ENCODE measurements at regions of chr17 and their contacts with region 1.

Region 1: DNA sequence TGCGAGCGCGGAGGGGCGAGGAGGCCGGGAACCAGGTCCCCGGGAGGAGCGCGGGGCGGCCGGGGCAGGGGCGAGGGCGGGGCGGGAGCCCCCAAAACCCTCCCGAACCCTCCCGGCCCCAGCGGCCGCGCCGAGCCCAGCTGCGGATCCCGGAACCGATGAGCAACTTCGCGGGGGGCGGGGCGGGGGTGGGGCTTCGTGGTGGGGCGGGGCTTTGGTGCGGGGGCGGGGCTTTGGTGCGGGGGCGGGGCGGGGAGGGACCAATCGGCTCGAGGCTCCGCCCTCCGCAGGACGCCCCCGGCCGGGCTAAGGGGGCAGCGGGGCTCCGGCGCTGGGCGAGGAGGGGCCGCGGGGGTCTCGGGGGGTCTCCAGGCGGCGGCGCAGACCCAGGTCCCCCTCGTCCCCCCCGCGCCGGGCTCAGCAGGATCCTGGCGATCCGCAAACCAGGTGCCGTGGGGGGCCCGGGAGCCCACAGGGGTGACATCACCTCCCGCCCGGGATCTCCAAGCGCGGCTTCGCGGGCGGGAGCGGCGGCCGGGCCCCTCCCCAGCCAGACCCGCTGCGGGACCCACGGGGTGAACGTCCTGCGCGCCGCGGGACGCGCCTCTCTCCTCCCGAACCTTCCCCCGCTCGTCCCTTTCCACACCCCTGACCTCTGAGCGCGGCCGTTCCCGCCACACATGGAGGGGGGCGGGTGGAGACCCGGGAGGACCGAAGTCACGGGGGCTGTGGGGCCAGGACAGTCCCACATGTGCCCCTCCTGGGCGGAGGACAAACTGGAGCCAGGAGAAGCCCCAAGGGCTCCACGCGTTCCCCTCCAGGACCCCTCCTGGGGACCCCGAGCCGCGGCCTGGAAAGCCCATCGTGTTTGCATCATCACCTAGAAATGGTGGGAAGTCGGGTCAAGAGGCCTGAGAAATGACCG is at the start of gene ABR:
- DNase-seq: peak; percentile 58
- H3K4me3 Mint-ChIP-seq: peak within 1 kb of the TSS; percentile 67
- H3K27ac Mint-ChIP-seq: no peak within 1 kb of the TSS
- H3K4me1 Mint-ChIP-seq: peaks cover 7% of the 10 kb centered on the region
- H3K27me3 Mint-ChIP-seq: no peaks in the 10 kb centered on the region
- total RNA-seq, gene ABR: 50.3 to 54.5 TPM

Region 2: DNA sequence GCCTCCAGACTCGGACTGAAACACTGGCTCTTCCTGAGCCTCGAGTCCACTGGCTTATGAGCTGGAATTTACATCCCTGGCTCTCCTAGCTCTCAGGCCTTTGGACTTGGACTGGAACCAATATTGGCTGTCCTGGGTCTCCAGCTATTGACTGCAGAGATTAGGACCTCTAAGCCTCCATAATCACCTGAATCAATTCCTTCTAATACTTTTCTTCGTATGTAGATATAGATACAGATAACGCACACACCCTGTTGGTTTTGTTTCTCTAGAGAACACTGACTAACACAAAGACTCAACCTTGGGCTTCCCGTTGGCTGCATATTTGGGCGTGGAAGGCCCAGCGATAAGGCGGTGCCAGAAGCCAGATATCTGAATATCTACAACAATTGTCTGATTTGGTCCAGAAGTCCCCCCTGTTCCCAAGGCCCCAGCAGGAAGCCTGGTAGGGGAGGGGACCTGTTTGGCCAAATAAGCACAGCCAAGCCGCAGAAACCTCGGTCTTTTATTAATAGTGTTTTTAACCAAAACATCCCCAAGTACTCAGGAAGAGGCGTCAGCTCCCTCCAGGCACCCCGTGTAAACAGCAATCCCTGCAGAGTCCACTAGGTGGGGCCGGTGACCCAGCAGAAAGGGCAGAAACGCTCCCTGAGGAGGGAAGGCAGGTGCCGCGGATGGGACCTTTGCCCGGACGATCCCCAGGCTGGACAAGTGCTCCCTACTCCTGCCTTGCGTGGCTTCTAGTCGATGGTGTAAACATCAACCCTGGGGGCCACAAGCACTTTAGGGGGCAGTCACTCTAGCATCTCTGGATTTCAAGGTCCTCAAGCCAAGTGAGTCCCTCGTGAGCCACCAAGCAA is 57.3 kb before region 1 on chr17:
- CTCF ChIA-PET with region 1: interaction called, 174 read pairs
- POLR2A ChIA-PET with region 1: no interaction called
- intact Hi-C with region 1: no loop called
- DNase-seq: peak; percentile 90
- H3K4me3 Mint-ChIP-seq: no peak overlapping the region
- H3K27ac Mint-ChIP-seq: no peak overlapping the region
- H3K4me1 Mint-ChIP-seq: peaks cover 6% of the 10 kb centered on the region
- H3K27me3 Mint-ChIP-seq: no peaks in the 10 kb centered on the region

Region 3: GRCh38 chr17:1197781-1198490 is 17.9 kb after region 1 on chr17:
- CTCF ChIA-PET with region 1: interaction called, 5 read pairs
- POLR2A ChIA-PET with region 1: no interaction called
- intact Hi-C with region 1: loop called (anchors 1 kb)
- DNase-seq: peak; percentile 67
- H3K4me3 Mint-ChIP-seq: no peak overlapping the region
- H3K27ac Mint-ChIP-seq: peak overlapping the region; percentile 38
- H3K4me1 Mint-ChIP-seq: peaks cover 32% of the 10 kb centered on the region
- H3K27me3 Mint-ChIP-seq: no peaks in the 10 kb centered on the region

Region 4: GRCh38 chr17:1241929-1242328 is 61.8 kb after region 1 on chr17:
- CTCF ChIA-PET with region 1: no interaction called
- POLR2A ChIA-PET with region 1: no interaction called
- intact Hi-C with region 1: no loop called
- DNase-seq: no peak
- H3K4me3 Mint-ChIP-seq: no peak overlapping the region
- H3K27ac Mint-ChIP-seq: no peak overlapping the region
- H3K4me1 Mint-ChIP-seq: peaks cover 16% of the 10 kb centered on the region
- H3K27me3 Mint-ChIP-seq: peaks cover 16% of the 10 kb centered on the region

Region 5: GRCh38 chr17:1769822-1770477 is 589.9 kb after region 1 on chr17:
- CTCF ChIA-PET with region 1: no interaction called
- POLR2A ChIA-PET with region 1: no interaction called
- intact Hi-C with region 1: no loop called
- DNase-seq: no peak
- H3K4me3 Mint-ChIP-seq: no peak overlapping the region
- H3K27ac Mint-ChIP-seq: no peak overlapping the region
- H3K4me1 Mint-ChIP-seq: peaks cover 2% of the 10 kb centered on the region
- H3K27me3 Mint-ChIP-seq: no peaks in the 10 kb centered on the region

Measured in activated CD4-positive, alpha-beta memory T cell treated with anti-CD3 and anti-CD28 coated beads for 36 hours (primary cell).